Activated T-helper 2 cell treated with anti-CD3 and anti-CD28 coated beads, Interferon-gamma antibody, Interleukin-2, Interleukin-4, amounts not matched to agents 10 μg/mL and 5 μg/mL and 100 μg/mL, durations not matched to agents 14 hours and 24 hours and 36 hours (primary cell): ENCODE measurements at regions of chr3 and their contacts with region 1.

Region 1: DNA sequence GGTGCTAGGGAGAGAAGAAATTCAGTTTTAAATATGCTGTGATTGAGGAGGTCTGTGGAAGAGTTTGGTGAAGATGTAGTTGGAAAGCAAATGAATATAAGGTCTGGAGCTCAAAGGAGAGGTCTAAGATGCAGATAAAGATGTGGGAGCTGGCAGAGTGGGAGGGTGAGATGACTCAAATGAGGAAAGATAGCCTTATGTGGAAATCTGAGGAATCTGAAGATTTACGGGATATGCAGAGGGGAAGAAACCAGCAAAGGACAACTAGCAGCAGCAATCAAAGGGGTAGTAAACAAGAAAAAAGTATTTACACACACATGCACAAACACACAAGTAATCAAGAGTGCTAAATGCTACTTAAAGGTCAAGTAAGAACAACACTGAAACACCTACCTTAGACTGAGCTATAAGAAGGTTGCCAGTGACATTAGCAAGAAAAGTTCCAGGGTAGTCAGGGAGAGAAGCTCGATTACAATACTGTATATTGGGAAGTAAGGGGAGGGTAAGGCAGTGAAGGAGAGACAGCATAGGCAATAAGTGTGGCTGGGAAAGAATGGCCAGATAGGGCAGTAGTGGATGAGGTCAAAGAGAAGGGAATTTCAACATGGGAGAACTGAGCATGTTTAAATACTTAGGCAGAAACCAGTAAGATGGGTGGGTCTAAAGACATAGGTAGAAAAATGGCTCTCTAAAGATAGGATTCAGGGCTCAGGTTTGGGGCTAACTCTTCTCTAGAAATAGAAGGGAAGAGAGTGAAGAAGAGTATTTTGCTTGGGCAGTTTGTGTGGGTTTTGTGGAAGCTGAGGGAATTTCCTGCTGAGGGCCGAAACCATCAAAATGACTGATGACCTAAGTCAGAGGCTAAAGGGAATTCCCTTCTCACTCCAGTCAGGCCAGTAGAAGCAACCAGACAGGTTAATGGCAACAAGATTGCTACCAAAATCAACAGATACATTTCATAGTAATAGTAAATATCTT is 8.9 kb downstream of the CMTM6 start:
- DNase-seq: no peak
- H3K4me3 Mint-ChIP-seq: no peak overlapping the region
- H3K27ac Mint-ChIP-seq: no peak overlapping the region
- H3K4me1 Mint-ChIP-seq: peaks cover 16% of the 10 kb centered on the region
- H3K27me3 Mint-ChIP-seq: no peaks in the 10 kb centered on the region

Region 2: GRCh38 chr3:32467333-32468070 is 26.2 kb before region 1 on chr3:
- intact Hi-C with region 1: loop called (anchors 2 kb)
- DNase-seq: peak; percentile 59
- H3K4me3 Mint-ChIP-seq: no peak overlapping the region
- H3K27ac Mint-ChIP-seq: no peak overlapping the region
- H3K4me1 Mint-ChIP-seq: peaks cover 29% of the 10 kb centered on the region
- H3K27me3 Mint-ChIP-seq: no peaks in the 10 kb centered on the region

Region 3: GRCh38 chr3:32480604-32481003 is 13.1 kb before region 1 on chr3:
- intact Hi-C with region 1: no loop called
- DNase-seq: no peak
- H3K4me3 Mint-ChIP-seq: no peak overlapping the region
- H3K27ac Mint-ChIP-seq: no peak overlapping the region
- H3K4me1 Mint-ChIP-seq: peaks cover 27% of the 10 kb centered on the region
- H3K27me3 Mint-ChIP-seq: no peaks in the 10 kb centered on the region

Region 4: GRCh38 chr3:32510075-32510724 is 16.5 kb after region 1 on chr3:
- intact Hi-C with region 1: no loop called
- DNase-seq: peak; percentile 51
- H3K4me3 Mint-ChIP-seq: no peak overlapping the region
- H3K27ac Mint-ChIP-seq: no peak overlapping the region
- H3K4me1 Mint-ChIP-seq: no peaks in the 10 kb centered on the region
- H3K27me3 Mint-ChIP-seq: peaks cover 4% of the 10 kb centered on the region

Region 5: GRCh38 chr3:32973982-32974381 is 480.3 kb after region 1 on chr3:
- intact Hi-C with region 1: no loop called
- DNase-seq: peak; percentile 44
- H3K4me3 Mint-ChIP-seq: no peak overlapping the region
- H3K27ac Mint-ChIP-seq: peak overlapping the region; percentile 28
- H3K4me1 Mint-ChIP-seq: peaks cover 51% of the 10 kb centered on the region
- H3K27me3 Mint-ChIP-seq: no peaks in the 10 kb centered on the region